Calu3 (cell line): ENCODE measurements at regions of chr7 and their contacts with region 1.

Region 1: GRCh38 chr7:18535810-18536415 is 40.4 kb downstream of the HDAC9 start:
- DNase-seq: peak; percentile 25
- H3K4me3 Mint-ChIP-seq: no peak overlapping the region
- H3K27ac Mint-ChIP-seq: peak overlapping the region; percentile 9
- H3K4me1 Mint-ChIP-seq: peaks cover 66% of the 10 kb centered on the region
- H3K27me3 Mint-ChIP-seq: no peaks in the 10 kb centered on the region
- CTCF ChIP-seq: no peak

Region 2: DNA sequence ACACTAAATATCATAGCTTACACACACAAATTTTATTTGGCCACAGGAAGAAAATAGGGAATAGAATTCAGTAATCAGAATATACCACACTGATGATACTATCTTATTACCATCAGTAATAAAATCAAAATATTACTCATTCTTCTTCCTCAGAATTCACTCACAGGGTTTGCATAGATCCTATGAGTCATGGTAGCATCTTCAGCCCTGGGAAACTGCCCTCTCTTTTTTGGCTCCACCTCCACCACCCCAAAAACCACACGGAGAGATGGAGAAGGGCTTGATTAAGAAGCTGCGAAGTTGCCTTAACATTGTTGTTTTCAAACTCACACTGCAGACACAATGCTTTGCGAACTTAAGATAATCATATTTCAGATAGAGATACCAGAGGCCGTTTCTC is 1391.6 kb before region 1 on chr7:
- CTCF ChIA-PET with region 1: interaction called, 10 read pairs
- intact Hi-C with region 1: no loop called
- DNase-seq: no peak
- H3K4me3 Mint-ChIP-seq: peak overlapping the region; percentile 36
- H3K27ac Mint-ChIP-seq: peak overlapping the region; percentile 100
- H3K4me1 Mint-ChIP-seq: peaks cover 66% of the 10 kb centered on the region
- H3K27me3 Mint-ChIP-seq: no peaks in the 10 kb centered on the region
- CTCF ChIP-seq: no peak

Region 3: DNA sequence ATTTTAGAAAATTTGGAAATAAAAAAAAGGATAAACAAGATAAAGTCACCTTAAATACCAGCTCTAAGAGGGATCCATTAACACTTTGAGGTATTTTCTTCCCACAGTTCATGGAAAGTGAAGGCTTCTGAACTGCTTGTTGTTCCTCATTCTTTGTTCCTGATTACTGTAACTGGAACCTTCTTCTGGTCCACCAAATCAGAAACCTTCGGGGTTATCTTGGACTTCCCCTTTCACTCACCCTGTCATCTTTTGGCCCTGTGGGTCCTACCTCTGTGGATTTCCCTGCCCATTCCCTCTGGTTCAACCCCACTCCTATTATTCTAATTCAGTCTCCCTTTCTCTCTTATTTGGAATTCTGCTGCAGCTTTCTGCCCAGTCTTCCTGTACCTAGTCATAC is 391.7 kb before region 1 on chr7:
- CTCF ChIA-PET with region 1: no interaction called
- intact Hi-C with region 1: no loop called
- DNase-seq: no peak
- H3K4me3 Mint-ChIP-seq: no peak overlapping the region
- H3K27ac Mint-ChIP-seq: no peak overlapping the region
- H3K4me1 Mint-ChIP-seq: peaks cover 10% of the 10 kb centered on the region
- H3K27me3 Mint-ChIP-seq: no peaks in the 10 kb centered on the region
- CTCF ChIP-seq: no peak

Region 4: DNA sequence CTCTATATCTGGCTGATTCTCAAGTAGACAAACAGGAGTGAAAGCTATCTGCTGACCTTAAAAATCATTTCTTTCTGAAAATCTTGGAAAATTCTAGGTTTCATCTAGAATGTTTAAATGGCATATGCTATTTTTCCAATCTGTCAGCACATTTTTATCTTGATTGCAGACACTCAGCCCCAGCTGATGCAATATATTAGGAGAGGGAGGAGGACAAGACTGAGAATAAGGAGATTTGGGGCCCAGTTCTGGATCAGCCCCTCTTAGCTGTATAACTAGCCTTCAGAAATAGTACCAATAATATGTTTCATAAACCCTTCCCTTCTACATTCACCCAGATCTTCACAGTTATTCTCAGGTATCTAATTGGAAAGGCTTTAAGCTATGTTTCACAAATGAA is 90.8 kb after region 1 on chr7:
- CTCF ChIA-PET with region 1: no interaction called
- intact Hi-C with region 1: no loop called
- DNase-seq: no peak
- H3K4me3 Mint-ChIP-seq: no peak overlapping the region
- H3K27ac Mint-ChIP-seq: no peak overlapping the region
- H3K4me1 Mint-ChIP-seq: no peaks in the 10 kb centered on the region
- H3K27me3 Mint-ChIP-seq: no peaks in the 10 kb centered on the region
- CTCF ChIP-seq: no peak